ENCODE measurements at regions of chr19 and their contacts with region 1.

Region 1: GRCh38 chr19:2950286-2951124 is 5.7 kb upstream of the ZNF77 start:
- H3K4me3 ChIP-seq: peak overlapping the region; percentile 82
- H3K27ac ChIP-seq: peak overlapping the region; percentile 70
- H3K4me1 ChIP-seq: peaks cover 4% of the 10 kb centered on the region; the same call in 1 of the 2 replicates
- CTCF ChIP-seq: 0 out of 2 replicates have a peak, but pooled peaks have one; percentile 41

Region 2: GRCh38 chr19:2648528-2648937 is 302.0 kb before region 1 on chr19:
- CTCF ChIA-PET with region 1: interaction called, 20 read pairs
- POLR2A ChIA-PET with region 1: interaction called, 10 read pairs
- H3K4me3 ChIP-seq: no peak overlapping the region
- H3K27ac ChIP-seq: no peak overlapping the region
- H3K4me1 ChIP-seq: no peaks in the 10 kb centered on the region
- CTCF ChIP-seq: peak; percentile 79

Region 3: GRCh38 chr19:2900296-2901252 is 49.9 kb before region 1 on chr19 and contains the start of gene ZNF57:
- CTCF ChIA-PET with region 1: interaction called, 5 read pairs
- POLR2A ChIA-PET with region 1: interaction called, 20 read pairs
- H3K4me3 ChIP-seq: peak within 1 kb of the TSS; percentile 81
- H3K27ac ChIP-seq: peak within 1 kb of the TSS; percentile 52; the same call in 1 of the 2 replicates
- H3K4me1 ChIP-seq: no peaks in the 10 kb centered on the region
- CTCF ChIP-seq: no peak

Region 4: DNA sequence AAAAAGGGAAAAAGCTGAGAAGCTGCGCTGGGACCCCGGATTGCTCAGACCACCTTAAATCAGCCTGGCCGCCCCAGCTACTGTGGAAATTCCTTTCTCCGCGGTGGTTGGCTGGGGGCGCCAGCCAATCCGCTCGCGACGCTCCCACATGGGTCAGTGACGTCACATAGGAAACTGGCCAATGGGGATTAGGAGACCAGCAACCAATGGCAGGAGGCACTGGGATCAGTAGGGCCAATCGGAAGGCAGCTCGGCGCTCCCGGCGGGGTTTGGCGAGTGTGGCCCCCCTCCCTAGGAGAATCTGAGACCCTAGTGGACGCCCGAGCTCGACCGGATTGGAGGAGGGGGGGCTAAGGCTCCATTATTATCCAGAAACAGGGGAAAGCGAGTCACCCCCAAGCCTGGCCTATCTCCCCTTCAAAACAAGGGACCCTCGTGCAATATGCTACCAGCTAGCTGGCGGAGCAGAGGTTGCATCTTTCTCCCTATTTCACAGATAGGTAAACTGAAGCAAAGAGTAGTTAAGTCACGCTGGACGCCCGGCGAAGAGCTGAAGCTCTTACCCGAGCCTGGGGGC is 85.1 kb after region 1 on chr19:
- CTCF ChIA-PET with region 1: interaction called, 11 read pairs
- POLR2A ChIA-PET with region 1: interaction called, 35 read pairs
- H3K4me3 ChIP-seq: peak overlapping the region; percentile 42
- H3K27ac ChIP-seq: peak overlapping the region; percentile 96
- H3K4me1 ChIP-seq: peaks cover 8% of the 10 kb centered on the region; the same call in 1 of the 2 replicates
- CTCF ChIP-seq: 0 out of 2 replicates have a peak, but pooled peaks have one; percentile 18

Region 5: DNA sequence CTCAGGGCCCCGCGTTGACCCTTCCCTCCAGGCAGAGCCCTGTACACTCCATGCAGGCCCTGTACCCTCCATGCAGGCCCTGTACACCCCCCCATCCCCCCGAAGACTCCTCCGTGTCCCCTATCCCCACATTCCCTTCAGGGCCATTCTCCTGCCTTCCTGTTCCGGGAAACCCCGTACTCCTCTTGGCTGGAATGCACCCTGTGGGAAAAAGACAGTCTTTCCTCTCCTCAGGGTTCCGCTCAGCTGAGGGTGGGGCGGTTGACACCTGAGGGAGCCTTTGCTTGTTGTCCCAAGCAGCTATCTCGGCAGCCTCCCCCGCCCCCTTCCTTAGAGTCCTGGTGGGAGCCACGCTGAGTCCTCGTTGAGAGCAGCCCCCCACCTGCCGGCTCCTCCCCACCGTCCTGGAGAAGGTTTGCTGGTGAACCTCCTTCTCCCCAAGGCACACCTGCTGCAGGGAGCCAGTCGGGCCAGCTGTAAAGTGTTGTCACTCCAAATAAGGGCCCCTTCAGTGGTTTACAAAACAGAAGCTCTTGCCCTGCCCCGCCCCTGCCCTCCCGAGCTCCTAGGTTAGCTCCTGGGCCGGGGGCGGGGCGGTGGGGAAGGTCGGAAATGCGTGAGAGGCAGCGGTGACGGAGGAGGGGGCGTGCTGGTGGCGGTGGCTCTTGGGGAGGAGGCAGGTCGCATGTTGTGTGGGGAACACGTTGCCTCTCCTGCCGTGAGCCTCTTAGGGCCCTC is 145.1 kb after region 1 on chr19:
- CTCF ChIA-PET with region 1: no interaction called
- POLR2A ChIA-PET with region 1: no interaction called
- H3K4me3 ChIP-seq: peak overlapping the region; percentile 78
- H3K27ac ChIP-seq: peak overlapping the region; percentile 75
- H3K4me1 ChIP-seq: peaks cover 6% of the 10 kb centered on the region; the same call in 1 of the 2 replicates
- CTCF ChIP-seq: no peak

Region 6: GRCh38 chr19:3210347-3211017 is 260.0 kb after region 1 on chr19:
- CTCF ChIA-PET with region 1: interaction called, 13 read pairs
- POLR2A ChIA-PET with region 1: no interaction called
- H3K4me3 ChIP-seq: no peak overlapping the region
- H3K27ac ChIP-seq: no peak overlapping the region
- H3K4me1 ChIP-seq: no peaks in the 10 kb centered on the region
- CTCF ChIP-seq: peak; percentile 79

Region 7: DNA sequence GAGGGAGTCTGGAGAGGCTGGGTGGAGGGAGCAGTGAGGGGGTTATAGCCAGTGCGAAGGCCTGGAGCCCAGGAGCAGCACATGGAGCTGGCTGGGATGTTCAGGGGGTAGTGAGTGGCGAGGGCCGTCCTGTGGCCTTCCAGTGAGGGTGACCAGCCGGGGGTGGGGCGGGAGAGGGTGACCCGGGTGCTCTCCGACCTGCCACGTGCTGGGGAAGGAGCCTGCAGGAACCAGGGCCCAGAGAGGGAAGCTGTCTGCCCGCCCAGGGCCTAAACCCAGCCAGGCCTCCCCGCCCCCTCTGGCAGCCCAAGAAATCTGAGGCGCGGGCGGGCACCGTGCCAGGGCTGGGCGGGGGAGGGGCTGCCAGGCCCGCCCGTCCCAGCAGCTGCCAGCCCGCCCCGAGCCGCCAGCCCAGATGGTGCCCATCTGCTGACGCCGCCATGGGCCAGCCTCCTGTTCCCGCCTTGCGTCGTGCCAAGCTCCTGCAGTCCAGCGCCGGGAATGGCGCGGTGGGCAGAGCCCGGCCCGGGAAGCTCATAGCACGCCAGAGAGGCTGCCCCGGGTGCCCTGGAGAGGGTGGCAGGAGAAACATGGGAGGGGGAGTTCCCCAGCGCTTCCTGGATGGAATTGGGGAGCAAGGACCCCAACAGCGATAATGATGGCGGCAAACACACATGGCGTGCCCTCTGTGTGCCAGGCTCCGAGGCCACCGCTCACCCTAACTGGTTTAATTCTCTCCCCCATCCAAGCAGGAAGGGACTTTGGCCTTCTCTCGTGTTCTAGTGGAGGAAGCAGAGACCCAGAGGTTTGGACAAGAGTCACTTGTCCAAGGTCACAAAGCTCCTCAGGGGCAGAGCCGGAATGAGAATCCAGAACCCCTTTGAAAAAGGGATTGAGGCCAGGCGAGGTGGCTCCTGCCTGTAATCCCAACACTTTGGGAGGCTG is 437.4 kb after region 1 on chr19:
- CTCF ChIA-PET with region 1: no interaction called
- POLR2A ChIA-PET with region 1: no interaction called
- H3K4me3 ChIP-seq: no peak overlapping the region
- H3K27ac ChIP-seq: no peak overlapping the region
- H3K4me1 ChIP-seq: no peaks in the 10 kb centered on the region
- CTCF ChIP-seq: no peak

Measured in HEK293 (cell line).